Sciatic nerve (tissue), 2 donors: ENCODE measurements at regions of chr18 and their contacts with region 1.

Region 1: DNA sequence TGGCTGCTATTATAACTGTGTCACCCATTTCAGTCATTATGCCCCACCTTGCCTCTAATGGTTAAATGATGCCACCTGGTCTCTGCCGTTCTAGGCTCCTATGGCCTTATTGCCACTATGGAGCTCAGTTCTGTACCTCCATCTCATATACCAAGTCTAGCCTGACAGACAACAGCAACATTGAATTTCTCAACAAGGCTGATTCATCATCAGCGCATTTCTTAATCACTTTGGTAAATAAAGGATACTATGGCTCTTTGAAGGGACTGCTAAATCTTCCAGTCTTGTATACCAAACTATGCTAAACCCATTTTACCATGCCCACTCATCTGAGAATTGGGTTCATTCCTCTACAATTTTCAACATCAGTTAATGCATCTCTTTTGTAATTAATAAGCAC is 784.5 kb upstream of the CELF4 start:
- DNase-seq: no peak
- ATAC-seq: no peak

Region 2: DNA sequence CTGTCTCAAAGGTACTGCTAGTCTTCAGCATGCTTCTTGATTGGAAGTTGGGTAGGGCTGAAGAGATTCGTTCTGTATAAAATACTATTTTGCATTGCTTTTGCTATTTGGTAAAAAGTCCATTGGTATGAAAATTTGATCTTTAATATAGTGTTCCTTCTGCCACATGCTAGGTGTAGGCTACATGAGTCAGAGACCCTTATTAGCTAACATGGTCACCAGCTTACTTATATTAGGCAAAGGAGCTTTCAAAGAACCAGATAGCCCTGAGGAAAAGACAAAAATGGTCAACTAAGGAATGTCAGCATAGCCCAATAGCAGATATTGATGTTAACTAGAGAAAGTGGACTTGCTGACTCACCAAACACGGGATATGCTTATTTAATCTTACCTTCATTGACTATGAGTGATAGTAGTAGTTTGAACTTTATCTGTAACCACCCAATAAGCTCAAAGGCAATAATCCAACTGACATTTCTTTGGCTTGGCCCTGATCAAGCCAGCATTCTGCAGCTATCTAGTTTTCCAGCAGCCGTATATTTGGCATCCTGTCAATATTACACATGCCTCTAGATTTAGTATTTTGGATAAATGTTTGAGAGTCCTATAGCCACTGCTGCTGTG is 1631.3 kb before region 1 on chr18:
- intact Hi-C with region 1: loop called (anchors 5 kb)
- DNase-seq: no peak
- ATAC-seq: no peak

Region 3: DNA sequence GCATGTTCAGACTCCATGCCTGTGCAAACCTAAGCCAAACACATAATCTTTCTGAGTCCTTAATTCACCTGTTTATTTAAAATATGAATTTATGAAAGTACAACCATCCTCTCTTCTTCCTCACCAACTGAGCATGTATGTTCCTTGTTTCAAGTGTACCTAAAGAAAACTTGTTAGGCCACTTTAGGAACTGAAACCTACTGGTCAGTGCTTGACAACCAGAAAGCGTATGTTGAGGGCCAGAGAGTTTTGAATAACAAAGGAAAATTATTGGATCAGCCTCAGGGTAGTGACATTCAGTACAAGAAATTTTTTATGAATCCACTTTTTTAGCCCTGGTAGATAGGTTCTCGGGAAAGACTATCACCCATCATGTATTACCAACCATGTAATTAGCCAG is 63.1 kb after region 1 on chr18:
- intact Hi-C with region 1: loop called (anchors 5 kb)
- DNase-seq: no peak
- ATAC-seq: no peak

Region 4: GRCh38 chr18:38664929-38665328 is 314.8 kb after region 1 on chr18:
- intact Hi-C with region 1: no loop called
- DNase-seq: no peak
- ATAC-seq: no peak